ENCODE measurements at regions of chr19 and their contacts with region 1.

Region 1: DNA sequence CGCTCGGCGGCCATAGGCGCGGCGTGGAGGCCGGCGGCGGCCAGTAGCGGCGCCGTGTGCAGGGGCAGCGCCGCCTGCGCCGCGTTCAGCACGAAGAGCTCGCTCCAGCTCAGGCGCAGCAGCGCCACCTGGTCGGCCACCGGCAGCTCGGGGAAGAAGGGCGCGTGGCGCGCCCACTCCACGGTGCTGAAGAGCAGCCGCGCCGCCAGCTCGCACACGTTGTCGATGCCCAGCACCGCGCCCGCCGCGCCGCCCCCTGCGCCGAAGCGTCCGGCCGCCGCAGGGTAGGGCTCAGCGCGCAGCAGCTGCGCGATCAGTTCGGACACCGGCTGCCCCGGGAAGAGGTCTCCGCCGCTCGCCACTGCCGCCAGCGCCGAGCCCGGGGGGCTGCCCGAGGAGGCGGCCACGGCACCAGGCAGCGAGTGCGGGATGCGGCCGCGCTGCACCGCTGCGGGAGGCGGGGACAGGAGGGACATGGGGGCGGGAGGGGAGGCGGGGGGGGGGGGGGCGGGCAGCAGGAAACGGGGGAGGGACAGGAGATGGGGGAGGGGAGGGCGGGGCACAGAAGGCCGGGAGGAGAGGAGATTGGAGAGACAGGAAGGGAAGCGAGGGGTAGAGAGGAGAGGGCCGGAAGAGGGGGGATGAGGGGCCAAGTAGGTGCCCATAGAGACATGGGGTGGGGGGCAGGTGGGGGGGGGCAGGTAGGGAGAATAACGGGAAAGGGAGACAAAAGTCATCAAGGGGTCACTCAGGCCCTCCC is 9.8 kb downstream of the OCEL1 start:
- DNase-seq: peak; percentile 80
- H3K4me3 ChIP-seq: peak overlapping the region; percentile 24 to 46 (median 45)
- H3K27ac ChIP-seq: no peak overlapping the region
- H3K4me1 ChIP-seq: peaks cover 11% of the 10 kb centered on the region
- H3K27me3 ChIP-seq: no peaks in the 10 kb centered on the region
- CTCF ChIP-seq: peak; percentile 35 to 66
- POLR2A ChIP-seq: no peak

Region 2: GRCh38 chr19:17052439-17053210 is 183.2 kb before region 1 on chr19:
- CTCF ChIA-PET with region 1: no interaction called
- POLR2A ChIA-PET with region 1: no interaction called
- dilution Hi-C with region 1: no loop called
- intact Hi-C with region 1: no loop called
- DNase-seq: peak; percentile 55
- H3K4me3 ChIP-seq: no peak overlapping the region
- H3K27ac ChIP-seq: no peak overlapping the region
- H3K4me1 ChIP-seq: no peaks in the 10 kb centered on the region
- H3K27me3 ChIP-seq: no peaks in the 10 kb centered on the region
- CTCF ChIP-seq: peak; percentile 52 to 68
- POLR2A ChIP-seq: no peak

Region 3: DNA sequence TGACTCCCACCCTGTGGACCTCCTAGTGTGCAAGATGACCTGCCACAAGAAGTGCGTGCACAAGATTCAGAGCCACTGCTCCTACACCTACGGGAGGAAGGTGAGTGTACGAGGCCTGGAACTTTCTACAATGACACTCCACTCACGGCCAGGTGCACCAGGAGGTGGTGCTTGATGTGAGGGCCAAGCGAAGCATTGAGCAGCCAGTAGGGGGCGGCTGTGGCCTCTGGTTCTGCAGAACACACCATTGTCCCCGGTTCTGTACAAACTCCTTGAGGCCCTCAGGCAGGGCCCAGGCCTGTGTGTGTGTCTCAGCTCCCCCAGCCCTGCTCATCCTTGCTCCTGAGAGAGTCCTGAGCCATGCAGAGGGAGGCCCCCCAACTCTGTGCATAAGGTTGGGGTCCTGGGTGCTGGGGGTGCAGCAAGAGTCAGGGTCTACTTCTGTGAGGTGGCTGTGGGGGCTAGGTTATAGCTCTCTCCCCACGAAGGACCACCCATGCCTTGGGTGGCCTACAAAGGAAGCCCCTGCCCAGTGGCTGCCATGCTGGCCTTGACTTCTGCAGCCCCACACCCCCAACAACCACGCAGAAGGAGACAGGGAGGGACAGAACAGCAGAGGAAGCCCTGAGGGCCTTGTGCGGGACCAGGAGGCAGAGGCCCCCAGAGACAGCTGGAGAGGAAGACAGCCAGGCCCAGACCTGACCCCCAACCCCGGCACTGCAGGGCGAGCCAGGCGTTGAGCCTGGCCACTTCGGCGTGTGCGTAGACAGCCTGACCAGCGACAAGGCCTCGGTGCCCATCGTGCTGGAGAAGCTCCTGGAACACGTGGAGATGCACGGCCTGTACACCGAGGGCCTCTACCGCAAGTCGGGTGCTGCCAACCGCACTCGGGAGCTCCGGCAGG is 30.3 kb before region 1 on chr19:
- CTCF ChIA-PET with region 1: interaction called, 13 read pairs
- POLR2A ChIA-PET with region 1: no interaction called
- dilution Hi-C with region 1: no loop called
- intact Hi-C with region 1: loop called (anchors 1 kb)
- DNase-seq: peak; percentile 50
- H3K4me3 ChIP-seq: no peak overlapping the region
- H3K27ac ChIP-seq: no peak overlapping the region
- H3K4me1 ChIP-seq: peaks cover 6% of the 10 kb centered on the region
- H3K27me3 ChIP-seq: no peaks in the 10 kb centered on the region
- CTCF ChIP-seq: peak; percentile 65 to 83
- POLR2A ChIP-seq: no peak

Region 4: DNA sequence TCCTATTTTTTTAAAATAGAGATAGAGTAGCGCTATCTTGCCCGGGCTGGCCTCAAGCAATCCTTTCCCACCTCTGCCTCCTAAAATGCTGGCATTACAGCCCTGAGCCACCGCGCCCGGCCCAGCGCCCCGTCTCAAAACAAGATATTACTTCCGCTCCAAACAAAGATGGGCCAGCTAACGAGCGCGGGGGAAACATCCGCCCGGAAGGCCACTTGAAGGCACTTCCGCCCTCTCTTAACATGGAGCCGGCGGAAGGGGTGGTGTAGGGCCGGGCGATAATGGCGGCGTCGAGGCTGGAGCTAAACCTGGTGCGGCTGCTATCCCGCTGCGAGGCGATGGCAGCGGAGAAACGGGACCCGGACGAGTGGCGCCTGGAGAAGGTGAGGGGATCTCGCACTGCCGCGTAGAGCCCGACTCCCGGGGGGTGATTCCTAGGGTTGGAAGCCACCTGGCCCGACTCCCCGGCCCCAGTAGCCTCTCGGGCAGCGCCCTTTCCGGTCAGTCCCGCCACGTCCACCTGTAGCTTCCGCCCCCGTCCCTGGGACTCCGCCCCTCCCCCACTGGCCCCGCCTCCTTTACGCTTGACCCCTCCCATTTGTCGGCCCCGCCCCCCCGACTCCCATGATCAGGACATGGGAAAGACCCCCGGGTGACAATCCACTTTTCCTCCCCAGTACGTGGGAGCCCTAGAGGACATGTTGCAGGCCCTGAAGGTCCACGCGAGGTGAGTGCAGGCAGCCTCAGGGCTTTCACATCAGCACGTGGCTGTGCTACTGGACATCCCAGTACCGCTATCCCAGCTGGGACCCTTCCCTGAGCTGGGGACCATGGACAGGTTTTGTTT is 20.4 kb before region 1 on chr19 and contains the start of gene USE1:
- CTCF ChIA-PET with region 1: interaction called, 16 read pairs
- POLR2A ChIA-PET with region 1: no interaction called
- dilution Hi-C with region 1: no loop called
- intact Hi-C with region 1: no loop called
- DNase-seq: peak; percentile 78
- H3K4me3 ChIP-seq: peak within 1 kb of the TSS; percentile 54 to 66 (median 57)
- H3K27ac ChIP-seq: peak within 1 kb of the TSS; percentile 88
- H3K4me1 ChIP-seq: peaks cover 7% of the 10 kb centered on the region
- H3K27me3 ChIP-seq: no peaks in the 10 kb centered on the region
- CTCF ChIP-seq: no peak
- POLR2A ChIP-seq: peak; percentile 89
- total RNA-seq, gene USE1: 21.2 and 21.3 TPM in 2 replicates

Region 5: GRCh38 chr19:17266975-17267788 is 31.4 kb after region 1 on chr19 and contains the start of gene BABAM1:
- CTCF ChIA-PET with region 1: interaction called, 4 read pairs
- POLR2A ChIA-PET with region 1: interaction called, 4 read pairs
- dilution Hi-C with region 1: no loop called
- intact Hi-C with region 1: loop called (anchors 2 kb)
- DNase-seq: peak; percentile 99
- H3K4me3 ChIP-seq: peak within 1 kb of the TSS; percentile 95 to 99 (median 99)
- H3K27ac ChIP-seq: peak within 1 kb of the TSS; percentile 56
- H3K4me1 ChIP-seq: peaks cover 18% of the 10 kb centered on the region
- H3K27me3 ChIP-seq: no peaks in the 10 kb centered on the region
- CTCF ChIP-seq: no peak
- POLR2A ChIP-seq: peak; percentile 82
- total RNA-seq, gene BABAM1: 110 and 118 TPM in 2 replicates